ENCODE measurements at regions of chr7 and their contacts with region 1.

Region 1: GRCh38 chr7:28389504-28390395 is 22.6 kb upstream of the CREB5 start:
- DNase-seq: no peak
- ATAC-seq: peak; percentile 65
- H3K4me3 ChIP-seq: no peak overlapping the region
- H3K27ac ChIP-seq: no peak overlapping the region
- H3K4me1 ChIP-seq: 0 out of 2 replicates have a peak, but pooled peaks cover 3% of the 10 kb centered on the region
- H3K27me3 ChIP-seq: peaks cover 16% of the 10 kb centered on the region
- CTCF ChIP-seq: peak; percentile 80

Region 2: DNA sequence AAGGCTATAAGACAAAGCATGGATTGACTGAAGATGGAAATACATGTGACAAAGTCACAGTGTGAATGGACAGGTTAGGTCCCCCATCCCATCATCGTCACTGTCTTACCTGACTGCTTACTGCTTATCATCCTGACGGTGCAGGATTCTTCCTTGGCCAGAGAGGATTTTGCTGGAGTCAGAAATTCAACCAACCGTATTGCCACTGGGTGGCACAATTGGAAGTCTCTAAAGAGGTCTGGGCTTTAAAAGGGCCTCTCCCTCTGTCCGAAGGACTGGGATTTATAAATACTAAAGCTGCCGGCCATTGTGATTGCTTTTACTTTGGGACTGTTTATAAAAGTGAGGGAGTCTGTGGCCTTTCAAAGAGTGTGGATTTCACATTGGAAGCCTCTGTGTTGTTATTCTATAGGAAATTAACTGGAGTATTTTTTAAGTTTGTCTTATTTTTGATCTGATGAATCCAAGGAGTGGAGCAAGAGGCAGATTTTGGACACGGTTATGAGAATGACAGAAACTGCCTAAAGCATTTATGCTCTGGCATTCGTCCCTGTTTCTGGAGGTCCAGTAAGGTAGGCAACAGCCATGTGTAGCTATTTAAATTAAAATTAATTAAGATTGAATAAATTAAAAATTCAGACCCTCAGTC is 90.8 kb before region 1 on chr7:
- CTCF ChIA-PET with region 1: no interaction called
- POLR2A ChIA-PET with region 1: no interaction called
- in situ Hi-C with region 1: no loop called
- intact Hi-C with region 1: loop called (anchors 5 kb)
- DNase-seq: peak; percentile 28
- ATAC-seq: peak; percentile 94
- H3K4me3 ChIP-seq: no peak overlapping the region
- H3K27ac ChIP-seq: no peak overlapping the region
- H3K4me1 ChIP-seq: no peaks in the 10 kb centered on the region
- H3K27me3 ChIP-seq: peaks cover 2% of the 10 kb centered on the region; the same call in 1 of the 2 replicates
- CTCF ChIP-seq: peak; percentile 76

Region 3: DNA sequence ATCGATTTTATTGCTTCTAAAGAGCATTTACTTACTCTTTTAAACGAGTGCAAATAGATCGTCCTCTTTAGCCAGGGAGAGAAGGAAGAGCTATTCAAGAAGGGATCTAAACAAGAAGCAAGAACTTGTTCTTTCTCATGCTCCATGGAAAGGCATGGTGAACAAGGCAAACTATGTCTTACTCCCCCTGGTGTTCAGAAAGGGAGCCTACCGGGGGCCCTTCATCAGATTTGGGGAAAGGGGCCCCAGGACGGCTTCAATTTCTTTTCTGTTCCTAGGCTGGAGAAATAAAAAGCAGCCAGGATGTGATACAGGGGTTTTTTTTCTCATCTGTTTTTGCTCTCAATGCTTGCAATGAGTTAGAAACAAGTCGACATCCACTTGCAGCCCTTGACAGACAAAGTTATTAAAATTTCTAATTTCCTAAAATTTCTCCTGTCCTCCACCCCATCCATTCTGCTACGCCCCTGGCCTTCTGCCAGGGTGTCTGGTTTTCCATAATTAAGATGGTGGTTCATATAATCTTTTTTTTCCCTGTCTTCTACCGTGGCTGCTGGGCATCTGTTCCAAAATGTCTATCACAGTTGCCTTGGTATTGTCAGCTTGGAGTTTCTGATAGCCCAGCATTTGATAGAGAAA is 237.0 kb after region 1 on chr7:
- CTCF ChIA-PET with region 1: no interaction called
- POLR2A ChIA-PET with region 1: no interaction called
- in situ Hi-C with region 1: no loop called
- intact Hi-C with region 1: loop called (anchors 2 kb)
- DNase-seq: no peak
- ATAC-seq: peak; percentile 74; the same call in 1 of the 2 replicates
- H3K4me3 ChIP-seq: no peak overlapping the region
- H3K27ac ChIP-seq: no peak overlapping the region
- H3K4me1 ChIP-seq: no peaks in the 10 kb centered on the region
- H3K27me3 ChIP-seq: peaks cover 2% of the 10 kb centered on the region
- CTCF ChIP-seq: peak; percentile 85

Region 4: GRCh38 chr7:28853834-28854749 is 464.3 kb after region 1 on chr7:
- CTCF ChIA-PET with region 1: no interaction called
- POLR2A ChIA-PET with region 1: no interaction called
- in situ Hi-C with region 1: no loop called
- intact Hi-C with region 1: loop called (anchors 2 kb)
- DNase-seq: peak; percentile 56
- ATAC-seq: peak; percentile 98
- H3K4me3 ChIP-seq: peak overlapping the region; percentile 47 to 64
- H3K27ac ChIP-seq: no peak overlapping the region
- H3K4me1 ChIP-seq: no peaks in the 10 kb centered on the region; the same call in 1 of the 2 replicates
- H3K27me3 ChIP-seq: peaks cover 33% of the 10 kb centered on the region
- CTCF ChIP-seq: peak; percentile 98

Measured in Panc1 (cell line).